Head of caudate nucleus (tissue), 42 donors: ENCODE measurements at regions of chr12 and their contacts with region 1.

Region 1: DNA sequence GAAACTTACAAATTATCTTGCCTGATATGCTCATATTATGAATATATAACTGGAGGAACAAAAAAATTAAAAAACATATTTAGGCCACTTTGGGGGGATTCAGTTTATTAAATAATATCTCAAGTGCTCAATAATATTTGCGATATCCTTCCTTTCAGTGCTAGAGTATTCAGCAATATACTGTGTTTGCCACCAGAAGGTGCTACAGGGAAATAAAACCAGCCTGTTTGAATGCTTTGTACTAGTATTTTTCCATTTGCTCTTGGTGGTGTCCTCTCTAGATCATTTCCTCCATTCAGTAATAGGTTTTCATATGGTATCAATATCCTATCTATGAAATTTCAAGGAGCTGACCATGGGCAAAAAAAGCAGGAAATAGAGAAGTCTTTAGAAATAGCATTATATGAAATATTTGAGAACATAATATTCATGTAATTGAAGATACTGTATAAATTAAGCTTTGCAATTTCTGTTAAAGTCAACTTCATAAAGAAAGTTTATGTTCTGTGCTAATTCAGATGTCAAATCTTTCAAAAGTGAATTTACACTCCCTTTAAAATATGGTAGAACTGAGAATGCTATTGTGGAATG is 106.2 kb upstream of the NAV3 start:
- DNase-seq: peak in 4 of 42 donors; percentile 16 to 48 (median 28)

Region 2: DNA sequence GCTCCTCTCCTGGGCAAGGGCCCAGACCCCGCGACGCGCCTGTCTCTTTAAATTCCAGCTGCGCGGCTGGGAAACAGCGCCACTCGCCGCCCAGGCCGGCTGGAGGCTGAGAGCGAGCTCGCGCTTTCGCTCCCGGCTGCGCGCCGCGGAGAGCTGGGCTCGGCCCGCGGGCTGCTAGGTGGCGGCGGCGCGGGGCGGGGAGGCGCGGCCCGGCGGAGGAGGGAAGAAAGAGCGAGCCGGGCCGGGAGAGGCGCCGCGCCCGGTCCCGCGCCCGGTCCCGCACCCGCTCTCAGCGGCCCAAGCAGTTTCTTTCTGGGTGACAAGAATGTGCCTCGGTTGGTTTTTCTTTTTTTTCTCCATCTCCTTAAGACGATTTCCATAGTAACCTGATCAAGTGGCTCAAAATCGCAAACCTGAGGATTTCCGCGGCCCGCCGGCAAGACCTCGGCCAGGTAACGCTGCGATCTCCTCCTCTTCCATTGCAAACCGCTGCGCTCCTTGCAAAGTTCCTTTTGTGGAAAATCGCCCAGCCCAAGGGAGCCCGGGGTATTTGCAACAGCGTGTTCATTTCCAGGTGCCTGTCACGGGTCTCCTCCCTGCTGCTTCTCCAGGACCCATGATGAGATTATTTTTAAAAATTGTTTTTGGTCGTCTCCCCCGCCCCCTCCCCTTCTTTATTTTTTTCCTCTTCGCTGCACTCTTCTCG is 399.5 kb before region 1 on chr12:
- intact Hi-C with region 1: no loop called
- DNase-seq: peak; percentile 37 to 89 (median 78)

Region 3: GRCh38 chr12:77925536-77926108 is 201.2 kb after region 1 on chr12:
- intact Hi-C with region 1: loop called (anchors 10 kb)
- DNase-seq: peak; percentile 47 to 93 (median 77)

Region 4: DNA sequence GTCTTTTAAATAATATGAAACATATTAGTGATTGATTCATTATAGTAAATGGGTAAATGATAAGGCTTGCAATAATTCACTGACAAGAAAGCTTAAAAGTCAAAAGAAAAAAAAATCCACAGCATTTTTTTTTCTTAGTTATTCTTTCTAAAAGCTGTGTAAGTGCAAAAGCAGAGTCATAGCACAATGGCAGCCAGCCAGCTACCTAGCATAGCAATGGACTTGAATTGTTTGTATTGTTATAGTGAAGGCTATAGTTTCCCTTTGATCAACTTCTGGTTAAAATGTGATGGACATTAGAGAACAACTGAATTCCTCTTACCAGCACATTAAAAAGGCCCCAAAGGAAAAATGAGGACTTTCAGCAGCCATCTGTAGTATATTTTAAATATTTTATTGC is 338.3 kb after region 1 on chr12:
- intact Hi-C with region 1: no loop called
- DNase-seq: peak in 6 of 42 donors; percentile 11 to 49 (median 22)